B cell (primary cell): ENCODE measurements at regions of chr14 and their contacts with region 1.

Region 1: DNA sequence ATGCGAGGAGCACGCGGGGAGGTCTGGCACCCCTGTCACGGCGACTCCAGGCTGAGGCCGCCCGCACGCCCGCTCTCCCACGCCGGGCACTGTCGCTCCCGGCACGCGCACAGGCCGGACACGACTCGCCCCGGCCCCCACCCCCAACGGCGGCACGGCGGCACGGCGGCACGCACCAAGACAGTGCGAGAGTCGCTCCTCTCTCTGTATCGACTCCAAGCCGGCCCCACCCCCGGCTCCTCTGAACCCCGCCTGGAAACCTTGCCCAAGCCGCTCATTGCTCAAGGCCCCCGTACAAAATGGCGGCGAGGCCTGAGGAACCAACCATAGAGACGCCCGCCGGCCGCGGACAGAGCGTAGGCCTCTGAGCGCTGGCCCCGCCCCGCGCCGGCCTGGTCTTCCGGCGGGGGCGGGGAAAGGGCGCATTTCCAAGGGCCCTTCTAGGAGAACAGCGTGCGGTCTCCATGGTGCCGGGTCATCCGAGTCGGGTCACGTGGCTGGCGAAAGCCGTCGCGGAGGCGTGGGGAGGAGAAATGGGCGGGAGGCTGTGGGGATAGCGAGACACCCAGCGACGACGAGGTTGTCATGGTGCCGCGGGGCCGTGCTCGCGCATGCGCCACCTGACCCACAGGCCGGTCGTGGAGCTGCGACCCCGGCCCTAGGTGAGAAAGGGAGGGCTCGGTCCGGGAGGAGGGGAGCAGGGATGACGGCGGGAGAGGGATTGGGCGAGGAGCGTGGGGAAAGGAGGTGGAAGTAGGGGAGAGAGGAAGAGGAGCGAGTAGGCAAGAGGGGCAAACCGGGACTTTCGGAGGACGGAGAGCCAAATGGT is at the start of gene CIPC:
- DNase-seq: peak; percentile 99
- ATAC-seq: peak; percentile 85
- H3K4me3 ChIP-seq: peak within 1 kb of the TSS; percentile 85 to 99 (median 99)
- H3K4me3 Mint-ChIP-seq: peak within 1 kb of the TSS; percentile 86
- H3K27ac ChIP-seq: peak within 1 kb of the TSS; percentile 92 to 99
- H3K27ac Mint-ChIP-seq: peak within 1 kb of the TSS; percentile 96
- H3K4me1 ChIP-seq: peaks cover 45 to 51% of the 10 kb centered on the region in 2 donors
- H3K4me1 Mint-ChIP-seq: peaks cover 66% of the 10 kb centered on the region
- H3K27me3 ChIP-seq: no peaks in the 10 kb centered on the region
- H3K27me3 Mint-ChIP-seq: no peaks in the 10 kb centered on the region
- CTCF ChIP-seq: no peak
- total RNA-seq, gene CIPC: 46.8 and 47.0 TPM in 2 replicates

Region 2: DNA sequence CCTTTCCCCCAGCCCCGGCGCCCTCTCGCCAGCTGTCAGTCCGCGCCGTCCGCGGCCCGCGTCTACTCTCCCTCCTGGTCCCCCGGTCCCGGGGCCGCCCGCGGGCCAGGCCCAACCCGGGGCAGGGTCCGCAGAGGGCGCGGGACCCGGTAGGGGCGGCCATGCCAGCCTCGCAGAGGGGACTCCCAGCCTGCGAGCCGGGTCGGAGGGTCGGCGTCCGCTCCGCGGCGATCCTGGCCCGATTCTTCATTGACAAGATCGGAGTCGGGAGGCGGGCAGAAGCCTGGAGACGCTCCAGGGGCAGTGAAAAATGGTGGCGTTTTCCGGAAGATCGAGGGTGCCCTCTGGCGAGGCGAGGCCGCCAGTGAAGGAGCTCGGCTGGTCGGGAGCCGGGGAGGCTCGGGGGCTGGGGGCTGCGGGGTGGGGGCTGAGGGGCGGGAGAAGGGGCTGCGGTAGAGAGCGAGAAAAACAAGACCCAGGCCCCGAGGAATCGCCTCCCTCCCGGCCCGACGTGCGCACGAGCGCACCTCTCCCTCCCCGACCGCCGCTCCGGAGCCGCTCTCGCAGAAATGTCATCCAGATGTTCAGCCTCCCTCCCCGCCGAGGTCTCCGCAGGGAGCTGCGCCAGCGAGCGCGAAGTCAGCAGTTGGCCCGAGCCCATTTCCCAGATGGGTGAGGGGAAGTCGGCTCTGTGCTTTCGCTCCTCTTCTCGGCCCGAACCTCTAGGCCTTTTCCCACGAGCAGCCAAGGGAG is 1115.5 kb before region 1 on chr14:
- CTCF ChIA-PET with region 1: no interaction called
- POLR2A ChIA-PET with region 1: no interaction called
- intact Hi-C with region 1: loop called (anchors 5 kb)
- DNase-seq: peak; percentile 86
- ATAC-seq: peak; percentile 70
- H3K4me3 ChIP-seq: peak overlapping the region; percentile 45 to 87 (median 74)
- H3K4me3 Mint-ChIP-seq: peak overlapping the region; percentile 89
- H3K27ac ChIP-seq: peak overlapping the region in 1 of 2 donors; percentile 82
- H3K27ac Mint-ChIP-seq: peak overlapping the region; percentile 87
- H3K4me1 ChIP-seq: peaks cover 41 to 56% of the 10 kb centered on the region in 2 donors
- H3K4me1 Mint-ChIP-seq: peaks cover 54% of the 10 kb centered on the region
- H3K27me3 ChIP-seq: no peaks in the 10 kb centered on the region
- H3K27me3 Mint-ChIP-seq: no peaks in the 10 kb centered on the region
- CTCF ChIP-seq: peak; percentile 78

Region 3: DNA sequence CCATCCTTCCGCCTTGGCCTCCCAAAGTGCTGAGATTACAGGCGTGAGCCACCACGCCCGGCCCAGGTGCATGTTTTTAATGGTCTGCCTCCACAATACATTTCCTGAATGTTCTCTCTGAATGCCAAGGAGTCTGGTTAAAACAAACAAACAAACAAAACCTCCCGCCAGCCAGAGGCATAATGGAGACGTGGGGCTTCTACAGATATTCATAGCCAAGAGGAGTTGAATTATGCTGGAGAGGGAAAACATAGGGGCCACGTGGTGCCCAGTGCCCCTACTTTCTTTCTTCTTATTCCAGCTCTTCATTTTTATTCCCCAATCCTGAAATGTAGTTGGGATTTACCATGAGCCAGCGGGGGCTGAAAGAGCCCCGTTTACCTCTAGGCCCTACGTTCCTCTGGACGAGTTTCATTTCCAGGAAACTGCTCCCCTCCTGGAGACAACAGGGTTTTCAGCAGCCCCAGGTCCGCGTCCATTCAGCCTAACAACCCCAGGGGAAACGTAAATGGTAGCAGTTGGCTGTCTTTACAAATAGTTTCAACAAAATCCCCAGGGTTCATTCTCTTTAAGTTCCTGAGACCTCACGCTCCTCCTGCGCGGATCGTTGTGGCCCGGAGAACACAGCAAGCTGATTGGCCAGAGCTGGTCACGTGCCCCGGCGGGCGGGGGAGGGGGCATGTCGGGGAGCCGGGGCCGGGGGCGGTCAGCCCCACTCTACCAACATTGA is 830.4 kb before region 1 on chr14:
- CTCF ChIA-PET with region 1: no interaction called
- POLR2A ChIA-PET with region 1: no interaction called
- intact Hi-C with region 1: no loop called
- DNase-seq: peak; percentile 8
- ATAC-seq: no peak
- H3K4me3 ChIP-seq: peak overlapping the region in 2 of 5 experiments; percentile 10 to 17
- H3K4me3 Mint-ChIP-seq: peak overlapping the region; percentile 24
- H3K27ac ChIP-seq: no peak overlapping the region
- H3K27ac Mint-ChIP-seq: no peak overlapping the region
- H3K4me1 ChIP-seq: peaks cover 5 to 7% of the 10 kb centered on the region in 2 donors
- H3K4me1 Mint-ChIP-seq: peaks cover 5% of the 10 kb centered on the region
- H3K27me3 ChIP-seq: peaks cover 0 to 5% (median 2%) of the 10 kb centered on the region in 4 experiments
- H3K27me3 Mint-ChIP-seq: peaks cover 21% of the 10 kb centered on the region
- CTCF ChIP-seq: no peak

Region 4: DNA sequence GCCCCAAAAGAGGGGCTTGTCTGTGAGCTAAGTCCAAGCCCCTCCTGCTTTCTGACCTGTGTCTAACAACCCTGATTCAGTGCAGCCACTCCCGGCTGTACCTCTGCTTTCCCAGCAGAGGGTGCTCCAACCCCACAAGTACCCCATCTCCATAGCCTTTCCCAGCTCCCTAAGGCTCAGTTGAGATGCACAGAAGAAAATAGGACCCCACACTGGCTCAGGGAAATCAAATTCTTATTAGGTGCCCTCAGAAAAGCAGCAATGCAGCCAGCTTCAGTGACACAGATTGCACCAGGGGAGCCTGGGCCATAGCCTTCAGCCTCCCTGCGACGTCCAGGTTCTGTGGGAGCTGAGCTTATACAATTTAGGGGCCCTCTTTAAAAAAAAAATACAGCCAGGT is 221.8 kb before region 1 on chr14:
- CTCF ChIA-PET with region 1: interaction called, 42 read pairs
- POLR2A ChIA-PET with region 1: no interaction called
- intact Hi-C with region 1: loop called (anchors 1 kb)
- DNase-seq: peak; percentile 68
- ATAC-seq: peak; percentile 55
- H3K4me3 ChIP-seq: no peak overlapping the region
- H3K4me3 Mint-ChIP-seq: no peak overlapping the region
- H3K27ac ChIP-seq: no peak overlapping the region
- H3K27ac Mint-ChIP-seq: no peak overlapping the region
- H3K4me1 ChIP-seq: no peaks in the 10 kb centered on the region
- H3K4me1 Mint-ChIP-seq: no peaks in the 10 kb centered on the region
- H3K27me3 ChIP-seq: peaks cover 0 to 3% (median 0%) of the 10 kb centered on the region in 4 experiments
- H3K27me3 Mint-ChIP-seq: peaks cover 4% of the 10 kb centered on the region
- CTCF ChIP-seq: peak; percentile 74

Region 5: DNA sequence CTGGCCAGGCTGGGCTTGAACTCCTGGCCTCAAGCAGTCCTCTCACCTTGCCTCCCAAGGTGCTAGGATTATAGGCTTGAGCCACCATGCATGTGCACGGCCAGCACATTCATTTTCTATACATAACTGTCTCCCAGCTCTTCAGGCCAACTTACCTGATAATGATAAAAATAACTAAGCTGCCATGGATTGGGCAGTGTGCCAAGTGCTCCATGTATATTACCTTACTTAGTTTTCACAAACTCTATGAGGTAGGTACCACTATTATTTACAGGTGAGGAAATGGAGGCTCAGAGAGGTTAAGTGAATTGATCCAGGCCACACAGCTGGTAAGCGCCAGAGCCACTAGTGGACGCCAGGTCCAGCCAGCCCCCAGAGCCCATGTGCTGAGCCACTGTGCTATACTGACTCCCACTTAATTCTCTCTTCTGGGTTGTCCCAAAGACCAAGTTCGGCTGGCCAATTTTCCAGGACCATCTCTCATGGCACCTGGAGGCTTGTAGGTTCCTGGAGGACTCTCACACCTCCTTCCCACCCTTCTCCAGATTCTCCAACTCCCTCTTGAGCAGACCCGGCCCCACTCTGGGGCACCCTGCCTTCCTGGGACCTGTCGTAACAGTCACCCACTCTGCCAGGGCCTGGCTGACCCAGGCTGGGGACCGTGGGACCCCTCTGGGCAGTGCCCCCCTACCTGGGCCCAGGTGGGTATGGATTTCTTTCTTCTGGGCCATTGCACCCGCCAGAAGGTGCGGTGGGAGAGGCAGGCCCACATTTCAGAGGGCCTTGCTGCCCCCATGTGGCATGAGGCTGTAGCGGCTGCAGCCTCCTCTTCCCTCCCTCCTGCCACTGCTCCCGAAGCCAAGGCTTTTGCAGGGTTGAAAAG is 30.0 kb before region 1 on chr14:
- CTCF ChIA-PET with region 1: interaction called, 71 read pairs
- POLR2A ChIA-PET with region 1: interaction called, 5 read pairs
- intact Hi-C with region 1: loop called (anchors 1 kb)
- DNase-seq: peak; percentile 69
- ATAC-seq: peak; percentile 66
- H3K4me3 ChIP-seq: no peak overlapping the region
- H3K4me3 Mint-ChIP-seq: no peak overlapping the region
- H3K27ac ChIP-seq: no peak overlapping the region
- H3K27ac Mint-ChIP-seq: no peak overlapping the region
- H3K4me1 ChIP-seq: peaks cover 22 to 32% of the 10 kb centered on the region in 2 donors
- H3K4me1 Mint-ChIP-seq: peaks cover 24% of the 10 kb centered on the region
- H3K27me3 ChIP-seq: peaks cover 0 to 22% (median 3%) of the 10 kb centered on the region in 4 experiments
- H3K27me3 Mint-ChIP-seq: no peaks in the 10 kb centered on the region
- CTCF ChIP-seq: peak; percentile 76

Region 6: DNA sequence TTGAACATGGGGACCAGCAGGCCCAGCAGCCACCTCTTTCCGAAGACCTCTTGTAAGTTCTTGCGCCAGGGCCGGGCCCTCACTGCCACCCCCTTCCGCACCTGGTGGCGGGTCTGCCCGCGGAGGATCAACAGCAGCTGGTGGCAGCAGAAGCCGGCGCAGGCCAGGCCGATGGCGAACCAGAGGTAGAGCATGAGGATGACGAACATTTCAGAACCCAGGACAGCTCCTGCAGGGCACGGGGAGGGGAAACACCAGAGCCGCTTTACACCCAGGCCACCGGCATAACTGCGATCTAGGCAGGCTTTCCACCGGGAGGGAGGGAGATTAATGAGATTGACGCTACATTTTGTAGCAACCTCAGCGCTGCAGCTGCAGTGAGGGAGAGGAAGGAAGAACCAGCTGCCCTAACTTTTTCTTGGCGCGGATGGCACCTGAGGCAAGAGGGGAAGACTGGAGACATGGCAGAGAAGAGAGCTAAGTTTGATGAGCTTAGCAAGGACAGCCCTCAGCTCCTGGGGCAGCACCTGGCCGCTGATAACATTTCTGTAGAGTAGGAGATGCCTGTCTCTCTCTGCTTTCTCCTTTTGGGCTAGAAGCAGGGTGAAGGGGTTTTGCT is 35.9 kb after region 1 on chr14:
- CTCF ChIA-PET with region 1: interaction called, 757 read pairs
- POLR2A ChIA-PET with region 1: no interaction called
- intact Hi-C with region 1: no loop called
- DNase-seq: peak; percentile 82
- ATAC-seq: peak; percentile 93
- H3K4me3 ChIP-seq: no peak overlapping the region
- H3K4me3 Mint-ChIP-seq: no peak overlapping the region
- H3K27ac ChIP-seq: no peak overlapping the region
- H3K27ac Mint-ChIP-seq: no peak overlapping the region
- H3K4me1 ChIP-seq: peaks cover 7 to 9% of the 10 kb centered on the region in 2 donors
- H3K4me1 Mint-ChIP-seq: peaks cover 5% of the 10 kb centered on the region
- H3K27me3 ChIP-seq: peaks cover 0 to 86% (median 56%) of the 10 kb centered on the region in 4 experiments
- H3K27me3 Mint-ChIP-seq: peaks cover 85% of the 10 kb centered on the region
- CTCF ChIP-seq: no peak

Region 7: DNA sequence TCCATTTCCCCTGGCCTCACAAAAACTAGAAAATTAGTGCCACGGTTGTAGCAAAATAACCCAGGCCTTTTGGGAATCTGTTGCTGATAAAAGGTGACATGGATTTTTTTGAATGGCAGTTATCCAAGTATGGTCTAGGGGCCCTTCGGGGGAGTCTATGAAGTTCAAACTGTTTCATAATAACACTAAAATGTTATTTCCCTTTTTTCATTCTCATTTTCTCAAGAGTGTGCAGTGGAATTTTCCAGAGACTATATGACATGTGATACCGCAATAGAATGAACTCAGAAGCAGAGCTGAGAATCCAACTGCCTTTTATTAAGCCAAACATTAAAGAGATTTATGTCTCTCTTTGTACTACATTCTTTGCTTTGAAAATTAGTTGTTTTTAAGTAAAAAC is 249.8 kb after region 1 on chr14:
- CTCF ChIA-PET with region 1: no interaction called
- POLR2A ChIA-PET with region 1: no interaction called
- intact Hi-C with region 1: no loop called
- DNase-seq: peak; percentile 40
- ATAC-seq: peak; percentile 54
- H3K4me3 ChIP-seq: no peak overlapping the region
- H3K4me3 Mint-ChIP-seq: peak overlapping the region; percentile 13
- H3K27ac ChIP-seq: peak overlapping the region in 1 of 2 donors; percentile 63
- H3K27ac Mint-ChIP-seq: peak overlapping the region; percentile 23
- H3K4me1 ChIP-seq: peaks cover 7 to 8% of the 10 kb centered on the region in 2 donors
- H3K4me1 Mint-ChIP-seq: peaks cover 23% of the 10 kb centered on the region
- H3K27me3 ChIP-seq: no peaks in the 10 kb centered on the region
- H3K27me3 Mint-ChIP-seq: no peaks in the 10 kb centered on the region
- CTCF ChIP-seq: no peak

Region 8: DNA sequence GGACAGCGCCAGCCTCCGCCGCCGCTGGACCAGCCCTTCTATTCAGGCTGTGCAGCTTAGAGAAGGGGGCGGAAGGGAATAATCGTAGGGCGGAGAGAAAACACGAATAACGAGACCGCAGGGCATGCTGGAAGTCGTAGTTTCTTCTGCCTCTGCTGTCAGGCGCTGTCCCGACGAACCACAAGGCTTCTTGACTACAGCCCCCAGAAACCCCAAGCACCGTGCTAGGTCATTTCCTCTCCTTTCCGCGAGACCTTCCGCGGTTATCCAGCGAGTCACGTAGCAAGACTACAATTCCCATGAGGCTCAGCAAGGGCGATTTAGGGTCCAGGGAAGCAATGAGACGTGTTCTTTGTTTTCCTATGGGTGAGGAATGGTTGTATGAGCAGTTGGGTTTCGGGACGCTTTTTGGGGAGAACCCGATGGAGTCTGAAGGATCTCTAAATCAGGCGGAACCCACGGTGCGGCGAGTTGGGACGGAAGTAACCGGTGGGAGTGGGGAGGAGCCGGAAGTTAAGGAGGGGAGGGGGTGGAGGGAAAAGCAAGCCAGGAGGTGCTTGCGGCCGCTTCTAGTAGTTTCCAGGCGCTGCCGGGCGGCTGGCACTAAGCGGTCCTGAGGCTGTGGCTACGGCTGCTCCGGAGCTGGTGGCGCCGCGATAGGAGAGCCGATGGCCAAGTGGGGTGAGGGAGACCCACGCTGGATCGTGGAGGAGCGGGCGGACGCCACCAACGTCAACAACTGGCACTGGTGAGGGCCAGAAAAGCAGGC is 359.8 kb after region 1 on chr14 and contains the starts of genes AHSA1 and VIPAS39:
- CTCF ChIA-PET with region 1: no interaction called
- POLR2A ChIA-PET with region 1: no interaction called
- intact Hi-C with region 1: loop called (anchors 1 kb)
- DNase-seq: peak; percentile 98
- ATAC-seq: peak; percentile 91
- H3K4me3 ChIP-seq: peak within 1 kb of the TSS; percentile 72 to 99 (median 93)
- H3K4me3 Mint-ChIP-seq: peak within 1 kb of the TSS; percentile 100
- H3K27ac ChIP-seq: peak within 1 kb of the TSS; percentile 80 to 91
- H3K27ac Mint-ChIP-seq: peak within 1 kb of the TSS; percentile 99
- H3K4me1 ChIP-seq: peaks cover 21 to 24% of the 10 kb centered on the region in 2 donors
- H3K4me1 Mint-ChIP-seq: peaks cover 39% of the 10 kb centered on the region
- H3K27me3 ChIP-seq: no peaks in the 10 kb centered on the region
- H3K27me3 Mint-ChIP-seq: no peaks in the 10 kb centered on the region
- CTCF ChIP-seq: no peak
- total RNA-seq, gene AHSA1: 87.5 and 112 TPM in 2 replicates
- total RNA-seq, gene VIPAS39: 25.3 and 25.9 TPM in 2 replicates